ENCODE measurements at regions of chr12 and their contacts with region 1.

Region 1: DNA sequence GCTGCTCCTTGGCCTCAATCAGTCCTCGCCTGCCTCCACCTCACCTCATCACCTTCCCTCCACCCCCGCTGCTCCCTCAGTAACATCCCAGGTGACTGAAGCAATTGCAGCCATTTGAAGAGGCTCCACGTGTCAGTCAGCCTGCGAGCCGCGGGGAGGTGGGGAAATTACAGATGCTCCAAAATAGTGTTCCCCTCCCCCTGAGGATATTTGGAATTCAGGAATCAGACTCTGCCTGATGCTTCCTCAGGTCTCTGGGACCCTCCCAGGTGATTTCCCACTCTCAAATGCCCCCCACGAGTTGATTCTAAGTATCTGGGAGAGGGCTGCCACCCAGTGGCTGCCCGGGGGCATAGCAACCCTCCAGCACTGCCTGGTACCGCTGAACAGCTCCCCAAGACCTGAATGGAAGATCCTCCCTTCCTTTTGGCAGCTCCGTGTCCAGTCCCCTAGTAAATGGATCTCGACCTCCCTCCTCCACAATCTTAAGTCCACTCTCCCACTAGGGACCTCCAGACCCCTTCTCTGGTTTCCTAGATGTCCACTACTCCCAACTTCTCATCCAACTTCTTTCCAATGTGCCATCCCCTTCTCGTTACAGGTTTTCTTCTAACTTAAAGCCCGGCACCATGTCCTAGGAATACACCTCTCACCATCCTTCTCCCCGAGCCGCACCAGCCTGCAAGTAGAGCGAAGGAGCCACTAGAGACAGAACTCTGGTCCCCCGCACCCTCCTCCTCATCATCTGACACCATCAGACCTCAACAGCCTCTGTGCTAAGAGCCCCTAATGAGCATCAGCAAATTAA is 1.4 kb upstream of the ASIC1 start:
- DNase-seq: no peak
- H3K4me3 ChIP-seq: peak overlapping the region in 1 of 4 donors; percentile 10
- H3K27ac ChIP-seq: no peak overlapping the region
- H3K4me1 ChIP-seq: peaks cover 0 to 32% (median 25%) of the 10 kb centered on the region in 4 donors
- H3K27me3 ChIP-seq: no peaks in the 10 kb centered on the region
- CTCF ChIP-seq: peak; percentile 86 to 99 (median 94)
- EP300 ChIP-seq: no peak
- POLR2A ChIP-seq: no peak

Region 2: DNA sequence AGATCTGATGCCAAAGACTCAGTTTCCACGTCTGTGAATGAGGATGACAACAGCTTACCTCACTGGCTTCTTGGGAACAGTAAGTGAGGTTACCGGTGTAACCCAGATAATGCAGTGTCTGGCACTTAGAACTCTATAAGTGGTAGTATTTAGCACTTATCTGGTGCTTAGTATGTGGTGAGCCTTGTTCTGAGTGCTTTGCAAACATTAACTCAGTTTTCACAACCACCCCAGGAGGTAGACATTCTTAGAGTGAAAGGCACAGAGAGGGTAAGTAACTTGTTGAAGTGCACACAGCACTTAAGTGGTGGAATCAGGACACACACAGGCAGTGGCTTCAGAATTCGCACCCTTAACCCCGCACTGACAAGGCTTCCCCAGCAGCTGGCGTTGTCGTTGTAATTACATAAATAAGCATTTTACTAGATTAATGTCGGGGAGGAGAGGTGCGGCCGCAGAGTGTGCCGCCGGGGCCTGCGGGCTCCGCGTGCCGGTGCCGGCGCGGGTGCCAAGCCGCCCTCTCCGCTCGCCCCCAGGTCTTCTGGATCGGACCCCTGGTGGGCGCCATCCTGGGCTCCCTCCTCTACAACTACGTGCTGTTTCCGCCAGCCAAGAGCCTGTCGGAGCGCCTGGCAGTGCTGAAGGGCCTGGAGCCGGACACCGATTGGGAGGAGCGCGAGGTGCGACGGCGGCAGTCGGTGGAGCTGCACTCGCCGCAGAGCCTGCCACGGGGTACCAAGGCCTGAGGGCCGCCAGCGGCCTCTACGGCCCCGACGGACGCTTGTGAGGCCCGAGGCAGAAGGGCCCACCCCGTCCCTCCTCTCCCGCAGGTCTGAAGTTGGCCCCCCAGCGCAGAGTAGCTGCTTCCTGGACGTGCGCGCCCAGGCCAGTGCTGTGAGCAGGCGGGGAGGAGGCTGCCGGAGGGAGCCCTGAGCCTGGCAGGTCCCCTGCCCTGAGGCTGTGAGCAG is 100.9 kb before region 1 on chr12:
- intact Hi-C with region 1: no loop called
- DNase-seq: no peak
- H3K4me3 ChIP-seq: no peak overlapping the region
- H3K27ac ChIP-seq: no peak overlapping the region
- H3K4me1 ChIP-seq: no peaks in the 10 kb centered on the region
- H3K27me3 ChIP-seq: peaks cover 32 to 69% (median 46%) of the 10 kb centered on the region in 3 donors
- CTCF ChIP-seq: no peak
- EP300 ChIP-seq: no peak
- POLR2A ChIP-seq: no peak

Region 3: GRCh38 chr12:49974231-49974675 is 81.8 kb before region 1 on chr12:
- intact Hi-C with region 1: loop called (anchors 1 kb)
- DNase-seq: peak; percentile 93
- H3K4me3 ChIP-seq: no peak overlapping the region
- H3K27ac ChIP-seq: peak overlapping the region in 3 of 4 donors; percentile 53 to 69 (median 60)
- H3K4me1 ChIP-seq: peaks cover 0 to 18% (median 14%) of the 10 kb centered on the region in 4 donors
- H3K27me3 ChIP-seq: no peaks in the 10 kb centered on the region
- CTCF ChIP-seq: peak; percentile 59 to 83 (median 68)
- EP300 ChIP-seq: no peak
- POLR2A ChIP-seq: no peak

Region 4: GRCh38 chr12:50038336-50038735 is 17.7 kb before region 1 on chr12:
- intact Hi-C with region 1: loop called (anchors 2 kb)
- DNase-seq: peak; percentile 4
- H3K4me3 ChIP-seq: no peak overlapping the region
- H3K27ac ChIP-seq: no peak overlapping the region
- H3K4me1 ChIP-seq: no peaks in the 10 kb centered on the region
- H3K27me3 ChIP-seq: no peaks in the 10 kb centered on the region
- CTCF ChIP-seq: no peak
- EP300 ChIP-seq: no peak
- POLR2A ChIP-seq: no peak

Region 5: DNA sequence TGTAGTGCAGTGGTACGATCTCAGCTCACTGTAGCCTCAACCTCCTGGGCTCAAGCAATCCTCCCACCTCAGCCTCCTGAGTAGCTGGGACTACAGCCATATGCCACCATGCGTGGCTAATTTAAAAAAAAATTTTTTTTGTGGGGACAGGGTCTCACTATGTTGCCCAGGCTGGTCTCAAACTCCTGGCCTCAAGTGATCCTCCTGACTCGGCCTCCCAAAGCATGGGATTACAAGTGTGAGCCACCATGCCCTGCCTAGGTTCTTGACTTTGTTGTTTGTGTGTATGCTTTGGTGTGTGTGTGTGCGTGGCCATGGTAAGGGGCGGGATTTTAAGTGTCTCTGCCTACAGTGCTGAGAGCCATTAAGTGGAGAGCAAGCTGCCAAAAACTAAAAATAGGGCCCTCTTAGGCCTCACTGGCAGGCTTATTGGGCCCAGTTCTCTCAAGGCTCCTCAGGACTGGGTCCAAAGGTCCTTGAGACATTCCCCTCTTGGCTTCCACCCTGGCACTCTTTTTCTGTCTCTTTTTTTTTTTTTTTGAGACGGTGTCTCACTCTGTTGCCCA is 61.1 kb after region 1 on chr12:
- intact Hi-C with region 1: no loop called
- DNase-seq: peak; percentile 49
- H3K4me3 ChIP-seq: no peak overlapping the region
- H3K27ac ChIP-seq: peak overlapping the region; percentile 34 to 61 (median 42)
- H3K4me1 ChIP-seq: peaks cover 0 to 41% (median 30%) of the 10 kb centered on the region in 4 donors
- H3K27me3 ChIP-seq: no peaks in the 10 kb centered on the region
- CTCF ChIP-seq: no peak
- EP300 ChIP-seq: no peak
- POLR2A ChIP-seq: no peak

Measured in sigmoid colon (tissue), 7 donors.